ENCODE measurements at regions of chr17 and their contacts with region 1.

Region 1: GRCh38 chr17:47615766-47616424 is 33.8 kb upstream of the KPNB1 start:
- DNase-seq: no peak
- ATAC-seq: peak; percentile 34
- H3K4me3 Mint-ChIP-seq: no peak overlapping the region
- H3K27ac Mint-ChIP-seq: no peak overlapping the region
- H3K4me1 Mint-ChIP-seq: peaks cover 11% of the 10 kb centered on the region
- H3K27me3 Mint-ChIP-seq: no peaks in the 10 kb centered on the region

Region 2: DNA sequence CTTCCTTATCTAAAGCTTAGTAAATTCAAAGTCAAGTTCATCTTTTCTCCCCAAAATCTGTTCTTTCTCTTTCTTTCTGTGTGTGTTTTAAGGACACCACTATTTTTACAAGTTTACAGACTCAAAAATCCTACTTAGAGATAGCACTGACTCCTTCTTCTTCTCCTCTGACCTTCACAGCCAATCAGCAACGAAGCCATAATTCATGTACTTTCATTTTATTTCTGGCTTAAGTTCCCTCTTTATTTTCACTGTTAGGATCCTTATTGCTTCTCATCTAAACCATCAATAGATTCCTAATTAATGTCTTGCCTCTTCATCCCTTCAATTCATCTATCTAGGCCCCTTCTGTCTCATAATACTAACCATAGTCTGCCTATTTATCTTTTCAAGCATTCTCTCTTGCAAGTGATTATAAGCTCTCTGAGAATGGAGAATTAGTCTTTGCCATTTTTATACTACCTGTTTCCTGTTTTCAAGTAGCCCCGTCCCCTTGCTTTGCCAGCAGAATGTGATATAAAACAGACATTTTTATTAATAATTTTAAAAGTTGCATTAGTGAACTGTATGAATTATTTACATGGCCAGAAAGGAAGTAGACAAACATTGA is 453.8 kb before region 1 on chr17:
- CTCF ChIA-PET with region 1: no interaction called
- POLR2A ChIA-PET with region 1: no interaction called
- intact Hi-C with region 1: loop called in 1 of 2 experiments (anchors 10 kb)
- DNase-seq: no peak
- ATAC-seq: no peak
- H3K4me3 Mint-ChIP-seq: no peak overlapping the region
- H3K27ac Mint-ChIP-seq: peak overlapping the region; percentile 14
- H3K4me1 Mint-ChIP-seq: peaks cover 19% of the 10 kb centered on the region
- H3K27me3 Mint-ChIP-seq: no peaks in the 10 kb centered on the region

Region 3: GRCh38 chr17:47229535-47230443 is 386.1 kb before region 1 on chr17:
- CTCF ChIA-PET with region 1: interaction called, 3 read pairs
- POLR2A ChIA-PET with region 1: no interaction called
- intact Hi-C with region 1: loop called (anchors 1 to 5 kb)
- DNase-seq: peak; percentile 90
- ATAC-seq: peak; percentile 94
- H3K4me3 Mint-ChIP-seq: peak overlapping the region; percentile 43
- H3K27ac Mint-ChIP-seq: peak overlapping the region; percentile 17
- H3K4me1 Mint-ChIP-seq: peaks cover 9% of the 10 kb centered on the region
- H3K27me3 Mint-ChIP-seq: peaks cover 5% of the 10 kb centered on the region

Region 4: GRCh38 chr17:47323382-47324222 is 292.3 kb before region 1 on chr17 and contains the start of gene EFCAB13:
- CTCF ChIA-PET with region 1: interaction called, 3 read pairs
- POLR2A ChIA-PET with region 1: no interaction called
- intact Hi-C with region 1: loop called in 1 of 2 experiments (anchors 5 kb)
- DNase-seq: peak; percentile 86
- ATAC-seq: peak; percentile 84
- H3K4me3 Mint-ChIP-seq: peak within 1 kb of the TSS; percentile 85
- H3K27ac Mint-ChIP-seq: peak within 1 kb of the TSS; percentile 91
- H3K4me1 Mint-ChIP-seq: peaks cover 18% of the 10 kb centered on the region
- H3K27me3 Mint-ChIP-seq: peaks cover 10% of the 10 kb centered on the region
- total RNA-seq, gene EFCAB13: 4.6 to 5.9 TPM

Region 5: GRCh38 chr17:47363171-47363570 is 252.7 kb before region 1 on chr17:
- CTCF ChIA-PET with region 1: interaction called, 5 read pairs
- POLR2A ChIA-PET with region 1: no interaction called
- intact Hi-C with region 1: loop called (anchors 2 to 5 kb)
- DNase-seq: no peak
- ATAC-seq: no peak
- H3K4me3 Mint-ChIP-seq: no peak overlapping the region
- H3K27ac Mint-ChIP-seq: no peak overlapping the region
- H3K4me1 Mint-ChIP-seq: no peaks in the 10 kb centered on the region
- H3K27me3 Mint-ChIP-seq: no peaks in the 10 kb centered on the region

Region 6: DNA sequence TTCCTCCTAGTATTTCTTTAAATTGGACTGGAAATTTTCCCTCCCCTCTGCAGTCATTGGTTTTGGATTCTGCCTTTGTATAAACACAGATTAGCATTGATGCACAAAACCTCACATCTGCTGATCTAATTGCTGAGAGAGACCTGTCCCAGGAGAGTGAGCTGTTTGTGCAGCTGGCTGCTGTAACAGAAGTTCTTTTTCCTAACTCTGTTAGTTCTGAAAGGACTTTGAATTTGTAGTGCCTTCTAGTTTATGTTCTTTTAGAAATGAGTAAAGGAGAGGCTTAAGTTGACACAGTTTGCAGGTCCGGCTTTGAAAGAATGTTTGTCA is 11.3 kb before region 1 on chr17:
- CTCF ChIA-PET with region 1: interaction called, 31 read pairs
- POLR2A ChIA-PET with region 1: no interaction called
- intact Hi-C with region 1: no loop called
- DNase-seq: no peak
- ATAC-seq: no peak
- H3K4me3 Mint-ChIP-seq: no peak overlapping the region
- H3K27ac Mint-ChIP-seq: peak overlapping the region; percentile 14
- H3K4me1 Mint-ChIP-seq: peaks cover 4% of the 10 kb centered on the region
- H3K27me3 Mint-ChIP-seq: no peaks in the 10 kb centered on the region

Region 7: GRCh38 chr17:47629826-47630225 is 13.9 kb after region 1 on chr17:
- CTCF ChIA-PET with region 1: interaction called, 12 read pairs
- POLR2A ChIA-PET with region 1: no interaction called
- intact Hi-C with region 1: no loop called
- DNase-seq: no peak
- ATAC-seq: no peak
- H3K4me3 Mint-ChIP-seq: no peak overlapping the region
- H3K27ac Mint-ChIP-seq: no peak overlapping the region
- H3K4me1 Mint-ChIP-seq: no peaks in the 10 kb centered on the region
- H3K27me3 Mint-ChIP-seq: no peaks in the 10 kb centered on the region

Measured in activated CD4-positive, alpha-beta T cell treated with anti-CD3 and anti-CD28 coated beads for 36 hours (primary cell).